ENCODE measurements at regions of chr17 and their contacts with region 1.

Region 1: DNA sequence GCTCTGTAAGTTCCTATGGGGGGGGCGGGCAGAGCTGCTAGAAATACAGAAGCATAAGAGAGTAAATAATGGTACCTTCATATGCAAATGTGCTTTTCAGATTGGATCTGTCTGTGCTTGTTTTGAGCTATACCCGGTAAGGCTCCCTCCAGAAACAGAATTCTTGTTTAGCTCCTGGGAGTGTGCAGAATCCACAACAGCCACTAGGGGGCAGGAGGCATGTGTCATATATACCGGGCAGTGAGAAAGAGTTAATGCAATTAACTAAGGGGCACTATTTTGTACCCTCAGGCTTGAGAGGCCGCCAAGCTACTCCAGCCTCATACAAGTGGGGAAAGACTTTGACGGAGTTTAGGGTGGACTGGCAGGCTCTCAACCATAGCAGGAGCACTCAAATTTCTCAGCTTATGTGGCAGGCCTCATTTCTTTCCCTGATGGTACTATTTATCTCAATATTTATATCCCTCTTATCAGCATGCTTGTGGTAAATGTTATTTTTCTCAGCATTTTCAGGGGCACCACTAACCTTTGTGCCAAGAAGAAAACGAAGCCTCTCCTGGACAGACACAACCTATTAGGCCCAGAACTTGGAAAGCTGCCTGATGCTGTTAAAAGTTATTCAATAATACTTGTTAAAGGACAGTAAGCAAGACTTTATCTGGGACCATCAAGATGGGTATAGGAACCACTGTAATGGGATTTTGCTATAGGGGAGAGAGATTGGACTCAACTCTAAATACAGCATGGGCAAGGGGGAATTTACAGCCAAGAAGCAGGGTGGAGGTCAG is 10.7 kb upstream of the CENPV start:
- DNase-seq: peak; percentile 56 to 73 (median 66)
- ATAC-seq: peak; percentile 63 to 88 (median 82)
- H3K4me3 ChIP-seq: no peak overlapping the region
- H3K27ac ChIP-seq: peak overlapping the region in 2 of 12 donors; percentile 5 to 31
- H3K4me1 ChIP-seq: peaks cover 0 to 5% (median 0%) of the 10 kb centered on the region in 12 donors
- H3K27me3 ChIP-seq: no peaks in the 10 kb centered on the region
- CTCF ChIP-seq: peak; percentile 87 to 96 (median 92)
- POLR2A ChIP-seq: no peak

Region 2: GRCh38 chr17:16304830-16305229 is 59.1 kb before region 1 on chr17:
- intact Hi-C with region 1: no loop called
- DNase-seq: no peak
- ATAC-seq: no peak
- H3K4me3 ChIP-seq: no peak overlapping the region
- H3K27ac ChIP-seq: no peak overlapping the region
- H3K4me1 ChIP-seq: no peaks in the 10 kb centered on the region
- H3K27me3 ChIP-seq: no peaks in the 10 kb centered on the region
- CTCF ChIP-seq: peak in 6 of 12 donors; percentile 7 to 35 (median 18)
- POLR2A ChIP-seq: no peak

Region 3: GRCh38 chr17:16415031-16415924 is 51.3 kb after region 1 on chr17 and contains the start of gene TRPV2:
- intact Hi-C with region 1: loop called in 4 of 10 experiments (anchors 2 to 10 kb)
- DNase-seq: peak; percentile 48 to 82 (median 59)
- ATAC-seq: peak; percentile 16 to 77 (median 40)
- H3K4me3 ChIP-seq: peak within 1 kb of the TSS; percentile 37 to 93 (median 68)
- H3K27ac ChIP-seq: peak within 1 kb of the TSS; percentile 56 to 98 (median 89)
- H3K4me1 ChIP-seq: peaks cover 0 to 44% (median 20%) of the 10 kb centered on the region in 12 donors
- H3K27me3 ChIP-seq: no peaks in the 10 kb centered on the region
- CTCF ChIP-seq: peak in 7 of 12 donors; percentile 11 to 39 (median 32)
- POLR2A ChIP-seq: no peak
- total RNA-seq, gene TRPV2: 5.8 to 43.5 (median 11.5) TPM

Region 4: DNA sequence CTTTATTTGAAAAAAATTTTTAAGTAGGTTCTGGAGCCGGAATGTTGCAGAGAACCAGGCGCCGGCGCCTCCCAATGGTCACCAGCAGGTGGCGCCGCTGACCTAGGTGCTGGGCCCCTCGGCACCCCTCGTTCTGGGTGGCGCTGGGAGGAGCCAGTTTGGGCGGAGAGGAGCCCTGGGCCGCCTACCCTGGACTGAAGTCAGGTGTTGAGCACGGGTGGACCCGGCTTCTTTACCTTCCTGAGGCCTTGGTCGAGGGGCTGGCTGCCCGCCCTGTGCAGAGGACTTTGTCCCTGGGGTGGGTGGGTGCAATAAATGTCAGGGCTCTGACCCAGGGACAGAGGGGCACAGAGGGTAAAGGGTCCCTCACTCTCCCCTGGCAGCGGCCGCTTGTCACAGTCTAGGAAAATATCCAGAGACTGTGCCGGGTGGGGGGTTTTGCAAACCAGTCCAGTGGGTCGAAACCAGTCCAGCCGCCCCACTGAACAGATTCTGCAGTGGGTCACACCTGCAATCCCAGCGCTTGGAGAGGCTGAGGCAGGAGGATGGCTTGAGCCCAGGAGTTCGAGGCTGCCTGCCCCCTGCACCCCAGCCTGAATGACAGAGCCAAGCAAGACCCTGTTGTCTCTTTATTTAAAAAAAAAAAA is 638.1 kb after region 1 on chr17:
- intact Hi-C with region 1: no loop called
- DNase-seq: peak; percentile 69 to 90 (median 77)
- ATAC-seq: peak; percentile 80 to 90 (median 84)
- H3K4me3 ChIP-seq: peak overlapping the region in 1 of 12 donors; percentile 2
- H3K27ac ChIP-seq: peak overlapping the region in 1 of 12 donors; percentile 9
- H3K4me1 ChIP-seq: peaks cover 0 to 8% (median 6%) of the 10 kb centered on the region in 12 donors
- H3K27me3 ChIP-seq: no peaks in the 10 kb centered on the region
- CTCF ChIP-seq: peak in 11 of 12 donors; percentile 95 to 100 (median 98)
- POLR2A ChIP-seq: no peak

Measured in heart left ventricle (tissue), 16 donors.